GM12878 (cell line): ENCODE measurements at regions of chr6 and their contacts with region 1.

Region 1: GRCh38 chr6:129335792-129336191 is 374.2 kb downstream of the ARHGAP18 start:
- DNase-seq: no peak
- ATAC-seq: no peak
- H3K4me3 ChIP-seq: no peak overlapping the region
- H3K27ac ChIP-seq: no peak overlapping the region
- H3K4me1 ChIP-seq: no peaks in the 10 kb centered on the region
- H3K27me3 ChIP-seq: no peaks in the 10 kb centered on the region; a peak in 1 of 4 replicates
- CTCF ChIP-seq: no peak
- EP300 ChIP-seq: no peak
- POLR2A ChIP-seq: no peak
- RAD21 ChIP-seq: no peak

Region 2: GRCh38 chr6:129345890-129346289 is 10.1 kb after region 1 on chr6:
- CTCF ChIA-PET with region 1: interaction called, 5 read pairs
- POLR2A ChIA-PET with region 1: interaction called, 3 read pairs
- RAD21 ChIA-PET with region 1: no interaction called
- SMC1A ChIA-PET with region 1: no interaction called
- in situ Hi-C with region 1: no loop called
- intact Hi-C with region 1: loop called (anchors 1 kb)
- DNase-seq: no peak
- ATAC-seq: no peak
- H3K4me3 ChIP-seq: no peak overlapping the region
- H3K27ac ChIP-seq: no peak overlapping the region
- H3K4me1 ChIP-seq: no peaks in the 10 kb centered on the region
- H3K27me3 ChIP-seq: no peaks in the 10 kb centered on the region
- CTCF ChIP-seq: no peak
- EP300 ChIP-seq: no peak
- POLR2A ChIP-seq: no peak
- RAD21 ChIP-seq: no peak

Region 3: GRCh38 chr6:129590408-129591022 is 254.7 kb after region 1 on chr6:
- CTCF ChIA-PET with region 1: no interaction called
- POLR2A ChIA-PET with region 1: no interaction called
- RAD21 ChIA-PET with region 1: no interaction called
- SMC1A ChIA-PET with region 1: no interaction called
- in situ Hi-C with region 1: no loop called
- intact Hi-C with region 1: no loop called
- DNase-seq: no peak
- ATAC-seq: no peak
- H3K4me3 ChIP-seq: no peak overlapping the region
- H3K27ac ChIP-seq: no peak overlapping the region
- H3K4me1 ChIP-seq: no peaks in the 10 kb centered on the region
- H3K27me3 ChIP-seq: no peaks in the 10 kb centered on the region
- CTCF ChIP-seq: no peak
- EP300 ChIP-seq: no peak
- POLR2A ChIP-seq: no peak
- RAD21 ChIP-seq: no peak